ENCODE measurements at regions of chr3 and their contacts with region 1.

Region 1: DNA sequence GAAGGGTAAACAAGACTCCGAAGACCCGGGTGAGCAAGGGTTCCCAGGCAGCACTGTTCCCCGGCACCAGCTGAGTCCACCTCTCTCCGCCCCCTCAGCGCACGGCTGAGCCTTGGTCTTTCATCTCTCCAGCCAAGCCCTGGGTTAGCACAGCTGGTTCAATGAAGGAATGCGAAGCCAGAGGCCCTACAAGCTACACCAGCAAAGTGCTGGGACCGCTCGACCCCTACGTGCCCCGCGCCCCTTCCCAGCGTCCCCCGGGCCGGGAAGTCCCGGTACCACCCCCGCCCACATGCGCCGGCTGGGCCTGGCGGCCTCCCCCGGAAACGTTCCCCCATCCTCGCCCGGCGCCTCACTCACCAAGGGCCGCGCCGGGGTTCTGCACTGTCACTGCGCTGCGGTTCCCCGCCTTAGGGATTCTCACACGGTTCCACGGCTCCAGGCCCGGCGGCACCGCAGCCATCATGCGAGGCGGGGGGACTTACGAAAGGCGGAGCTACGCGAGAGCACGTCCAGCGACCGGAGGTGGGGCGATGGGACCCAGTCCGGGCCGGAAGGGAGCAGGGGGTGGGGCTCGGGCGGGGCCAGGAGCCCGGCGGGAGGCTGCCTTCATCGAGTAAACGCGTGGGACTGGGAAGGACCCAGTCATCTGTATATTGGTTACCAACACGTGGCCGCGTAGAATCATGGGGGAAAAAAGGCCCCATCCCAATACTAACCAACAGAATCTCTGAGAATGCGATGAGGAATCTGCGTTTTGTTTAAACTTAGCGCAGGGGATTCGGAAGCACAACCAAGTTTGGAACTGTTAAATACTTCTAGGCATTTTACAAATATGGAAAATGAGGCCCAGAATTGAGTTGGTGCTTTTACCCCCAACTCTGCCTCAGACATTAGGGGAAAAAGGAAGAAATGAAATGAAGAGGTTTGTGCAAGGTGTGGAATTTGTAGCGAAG is 28.7 kb downstream of the GTPBP8 start:
- DNase-seq: peak; percentile 91
- H3K4me3 ChIP-seq: peak overlapping the region; percentile 83 to 91 (median 83)
- H3K27ac ChIP-seq: peak overlapping the region; percentile 75
- H3K4me1 ChIP-seq: peaks cover 16% of the 10 kb centered on the region
- H3K27me3 ChIP-seq: no peaks in the 10 kb centered on the region
- CTCF ChIP-seq: no peak
- POLR2A ChIP-seq: peak; percentile 75

Region 2: DNA sequence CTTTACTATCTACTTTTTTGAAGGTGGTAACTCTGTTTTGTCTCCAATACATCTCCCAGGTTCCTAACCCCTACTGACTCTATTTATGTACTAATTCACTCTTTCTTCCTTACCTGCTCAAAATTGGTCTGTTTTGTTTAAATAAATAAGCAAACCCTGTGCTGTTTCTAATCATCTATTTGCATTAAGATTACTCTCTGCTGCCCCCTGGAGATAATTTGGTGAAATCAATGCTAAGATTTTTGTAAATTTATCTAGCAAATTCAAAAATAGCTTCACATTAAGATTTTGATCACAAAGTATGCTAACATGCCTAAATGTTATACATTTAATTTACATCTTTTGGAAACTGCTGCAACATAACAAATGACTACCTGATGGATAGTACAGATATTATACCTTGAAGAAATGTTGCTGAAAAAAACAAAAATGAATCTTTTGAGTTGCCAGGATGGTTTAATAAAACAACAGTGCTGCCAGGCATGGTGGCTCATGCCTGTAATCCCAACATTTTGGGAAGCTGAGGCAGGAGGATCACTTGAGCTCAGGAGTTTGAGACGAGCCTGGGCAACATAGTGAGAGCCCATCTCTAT is 40.1 kb before region 1 on chr3:
- CTCF ChIA-PET with region 1: no interaction called
- POLR2A ChIA-PET with region 1: interaction called, 11 read pairs
- dilution Hi-C with region 1: no loop called
- intact Hi-C with region 1: no loop called
- DNase-seq: peak; percentile 48
- H3K4me3 ChIP-seq: no peak overlapping the region
- H3K27ac ChIP-seq: no peak overlapping the region
- H3K4me1 ChIP-seq: no peaks in the 10 kb centered on the region
- H3K27me3 ChIP-seq: peaks cover 3 to 13% of the 10 kb centered on the region in 2 experiments
- CTCF ChIP-seq: peak; percentile 34 to 36
- POLR2A ChIP-seq: no peak

Region 3: GRCh38 chr3:112990672-112991602 is 28.5 kb before region 1 on chr3 and contains the start of gene GTPBP8:
- CTCF ChIA-PET with region 1: interaction called, 4 read pairs
- POLR2A ChIA-PET with region 1: no interaction called
- dilution Hi-C with region 1: no loop called
- intact Hi-C with region 1: loop called (anchors 1 kb)
- DNase-seq: peak; percentile 87
- H3K4me3 ChIP-seq: peak within 1 kb of the TSS; percentile 62 to 92 (median 89)
- H3K27ac ChIP-seq: peak within 1 kb of the TSS; percentile 52
- H3K4me1 ChIP-seq: peaks cover 14% of the 10 kb centered on the region
- H3K27me3 ChIP-seq: no peaks in the 10 kb centered on the region
- CTCF ChIP-seq: peak in 1 of 2 donors; percentile 15
- POLR2A ChIP-seq: peak; percentile 82
- total RNA-seq, gene GTPBP8: 13.7 and 15.4 TPM in 2 replicates

Region 4: GRCh38 chr3:113002679-113003078 is 16.8 kb before region 1 on chr3:
- CTCF ChIA-PET with region 1: interaction called, 3 read pairs
- POLR2A ChIA-PET with region 1: interaction called, 5 read pairs
- dilution Hi-C with region 1: no loop called
- intact Hi-C with region 1: loop called (anchors 2 kb)
- DNase-seq: no peak
- H3K4me3 ChIP-seq: no peak overlapping the region
- H3K27ac ChIP-seq: no peak overlapping the region
- H3K4me1 ChIP-seq: peaks cover 7% of the 10 kb centered on the region
- H3K27me3 ChIP-seq: no peaks in the 10 kb centered on the region
- CTCF ChIP-seq: no peak
- POLR2A ChIP-seq: no peak

Region 5: GRCh38 chr3:113035387-113035982 is 16.0 kb after region 1 on chr3:
- CTCF ChIA-PET with region 1: interaction called, 60 read pairs
- POLR2A ChIA-PET with region 1: no interaction called
- dilution Hi-C with region 1: no loop called
- intact Hi-C with region 1: no loop called
- DNase-seq: peak; percentile 47
- H3K4me3 ChIP-seq: no peak overlapping the region
- H3K27ac ChIP-seq: no peak overlapping the region
- H3K4me1 ChIP-seq: no peaks in the 10 kb centered on the region
- H3K27me3 ChIP-seq: no peaks in the 10 kb centered on the region
- CTCF ChIP-seq: peak; percentile 73 to 83
- POLR2A ChIP-seq: no peak

Measured in endothelial cell of umbilical vein (primary cell).